Activated naive CD4-positive, alpha-beta T cell treated with anti-CD3 and anti-CD28 coated beads for 36 hours (primary cell): ENCODE measurements at regions of chr1 and their contacts with region 1.

Region 1: GRCh38 chr1:212455803-212456528 is 23.2 kb downstream of the NENF start:
- DNase-seq: peak; percentile 89
- H3K4me3 Mint-ChIP-seq: no peak overlapping the region
- H3K27ac Mint-ChIP-seq: no peak overlapping the region
- H3K4me1 Mint-ChIP-seq: peaks cover 3% of the 10 kb centered on the region
- H3K27me3 Mint-ChIP-seq: no peaks in the 10 kb centered on the region

Region 2: DNA sequence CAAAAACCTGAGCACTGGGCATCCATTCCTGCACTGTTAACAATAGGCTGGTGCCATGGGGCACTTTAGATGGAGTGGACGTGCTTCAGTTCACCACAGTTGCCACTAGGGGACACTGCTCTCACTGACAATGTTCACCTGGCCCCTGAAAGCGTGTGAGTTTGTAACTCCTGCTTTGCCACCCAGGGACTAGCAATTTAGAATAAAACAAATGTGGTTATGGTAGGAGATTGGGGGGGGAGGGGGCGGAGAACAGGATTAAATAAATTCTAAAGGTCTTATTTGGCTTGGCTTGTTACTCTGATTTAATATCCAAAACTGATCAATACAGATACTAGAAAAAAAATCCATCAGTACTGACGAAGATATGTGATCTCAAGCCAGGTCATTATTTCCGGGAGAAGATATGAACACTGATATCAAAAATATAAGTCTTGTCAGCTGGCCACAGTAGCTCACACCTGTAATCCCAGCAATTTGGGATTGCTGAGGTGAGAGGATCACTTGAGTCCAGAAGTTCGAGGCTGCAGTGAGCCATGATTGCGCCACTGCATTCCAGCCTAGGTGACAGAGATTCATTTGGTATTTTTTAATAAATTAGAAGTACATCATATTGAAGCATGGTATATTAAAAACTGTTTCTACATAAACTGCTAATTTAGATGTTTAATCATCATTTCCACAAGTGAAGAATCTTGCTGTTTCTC is 443.8 kb before region 1 on chr1:
- CTCF ChIA-PET with region 1: interaction called, 15 read pairs
- intact Hi-C with region 1: loop called (anchors 1 kb)
- DNase-seq: peak; percentile 84
- H3K4me3 Mint-ChIP-seq: no peak overlapping the region
- H3K27ac Mint-ChIP-seq: no peak overlapping the region
- H3K4me1 Mint-ChIP-seq: no peaks in the 10 kb centered on the region
- H3K27me3 Mint-ChIP-seq: no peaks in the 10 kb centered on the region

Region 3: GRCh38 chr1:212291505-212292134 is 164.3 kb before region 1 on chr1:
- CTCF ChIA-PET with region 1: interaction called, 6 read pairs
- intact Hi-C with region 1: loop called (anchors 5 kb)
- DNase-seq: no peak
- H3K4me3 Mint-ChIP-seq: no peak overlapping the region
- H3K27ac Mint-ChIP-seq: no peak overlapping the region
- H3K4me1 Mint-ChIP-seq: peaks cover 78% of the 10 kb centered on the region
- H3K27me3 Mint-ChIP-seq: no peaks in the 10 kb centered on the region

Region 4: DNA sequence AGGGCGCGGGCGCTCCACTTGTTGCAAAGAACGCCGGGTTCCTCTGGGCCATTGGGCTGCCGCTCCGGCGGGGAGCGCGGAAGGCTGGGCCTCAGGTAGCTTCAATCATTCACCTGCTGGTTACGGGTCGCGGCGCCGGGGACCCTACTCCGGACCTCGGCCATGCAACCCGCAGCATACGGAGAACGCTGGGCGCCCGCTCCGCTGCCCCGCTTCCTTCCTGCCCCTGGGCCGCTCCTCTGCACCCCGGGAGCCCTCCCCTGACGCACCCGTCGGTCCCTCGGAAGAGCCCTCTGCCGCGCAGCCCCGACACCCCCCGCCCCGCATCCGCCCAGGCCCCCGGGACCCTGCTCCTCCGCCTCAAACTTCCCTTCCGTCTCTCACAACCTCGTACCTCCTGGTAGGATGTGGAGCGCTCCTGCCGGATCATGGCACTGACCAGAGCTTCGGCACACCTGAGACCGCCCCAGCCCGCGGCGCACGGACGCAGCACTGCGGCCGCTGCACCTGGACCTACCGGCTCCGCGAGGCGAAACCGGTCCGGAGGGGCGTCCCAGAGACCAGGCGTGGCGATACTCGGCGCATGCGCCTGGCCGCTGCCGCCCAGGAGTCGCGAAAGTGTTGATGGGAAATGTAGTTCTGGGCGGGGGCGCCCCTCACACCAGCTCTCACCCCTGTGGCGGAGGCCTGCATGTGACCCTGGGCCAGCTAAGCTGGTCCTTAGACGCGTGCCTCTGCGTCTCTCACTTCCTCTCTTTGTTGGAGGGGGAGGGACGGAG is 41.4 kb before region 1 on chr1 and contains the start of gene PACC1:
- CTCF ChIA-PET with region 1: interaction called, 16 read pairs
- intact Hi-C with region 1: loop called (anchors 2 kb)
- DNase-seq: peak; percentile 88
- H3K4me3 Mint-ChIP-seq: peak within 1 kb of the TSS; percentile 95
- H3K27ac Mint-ChIP-seq: peak within 1 kb of the TSS; percentile 72
- H3K4me1 Mint-ChIP-seq: peaks cover 23% of the 10 kb centered on the region
- H3K27me3 Mint-ChIP-seq: no peaks in the 10 kb centered on the region
- total RNA-seq, gene PACC1: 9.5 to 10.2 TPM

Region 5: GRCh38 chr1:212469701-212470458 is 13.9 kb after region 1 on chr1:
- CTCF ChIA-PET with region 1: interaction called, 72 read pairs
- intact Hi-C with region 1: no loop called
- DNase-seq: no peak
- H3K4me3 Mint-ChIP-seq: no peak overlapping the region
- H3K27ac Mint-ChIP-seq: no peak overlapping the region
- H3K4me1 Mint-ChIP-seq: no peaks in the 10 kb centered on the region
- H3K27me3 Mint-ChIP-seq: no peaks in the 10 kb centered on the region

Region 6: GRCh38 chr1:213858581-213858980 is 1402.6 kb after region 1 on chr1:
- CTCF ChIA-PET with region 1: no interaction called
- intact Hi-C with region 1: no loop called
- DNase-seq: no peak
- H3K4me3 Mint-ChIP-seq: no peak overlapping the region
- H3K27ac Mint-ChIP-seq: no peak overlapping the region
- H3K4me1 Mint-ChIP-seq: peaks cover 17% of the 10 kb centered on the region
- H3K27me3 Mint-ChIP-seq: no peaks in the 10 kb centered on the region